Activated B cell treated with CpG ODN at 0.5 μM for 24 hours (primary cell): ENCODE measurements at regions of chr17 and their contacts with region 1.

Region 1: GRCh38 chr17:14359163-14360020 is 58.5 kb downstream of the HS3ST3B1 start:
- DNase-seq: peak; percentile 61
- ATAC-seq: peak; percentile 98
- H3K4me3 Mint-ChIP-seq: peak overlapping the region; percentile 26
- H3K27ac Mint-ChIP-seq: peak overlapping the region; percentile 8
- H3K4me1 Mint-ChIP-seq: peaks cover 26% of the 10 kb centered on the region
- H3K27me3 Mint-ChIP-seq: no peaks in the 10 kb centered on the region
- CTCF ChIP-seq: no peak

Region 2: DNA sequence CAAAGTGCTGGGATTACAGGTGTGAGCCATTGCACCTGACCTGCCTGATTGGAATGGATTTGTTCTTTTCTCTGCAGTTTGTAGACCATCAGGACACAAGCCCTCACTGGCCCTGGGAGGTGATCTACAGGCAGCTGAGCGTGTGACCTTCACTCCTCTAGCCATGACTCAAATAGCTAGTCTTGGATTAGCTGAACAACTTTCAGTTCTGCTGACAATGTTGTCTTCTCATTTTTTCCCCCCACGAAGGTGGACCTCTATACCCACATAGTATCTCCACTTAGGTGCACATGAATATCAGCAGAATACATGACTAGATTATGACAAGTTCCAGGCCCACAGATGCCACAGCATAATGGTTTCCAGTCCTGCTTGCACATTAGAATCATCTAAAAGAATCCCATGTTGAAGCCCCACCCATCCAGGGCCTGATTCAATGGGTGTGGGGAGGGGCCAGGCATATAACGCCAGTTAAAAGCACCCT is 21.8 kb before region 1 on chr17:
- CTCF ChIA-PET with region 1: interaction called, 3 read pairs
- POLR2A ChIA-PET with region 1: no interaction called
- intact Hi-C with region 1: loop called (anchors 1 kb)
- DNase-seq: no peak
- ATAC-seq: peak; percentile 82
- H3K4me3 Mint-ChIP-seq: no peak overlapping the region
- H3K27ac Mint-ChIP-seq: no peak overlapping the region
- H3K4me1 Mint-ChIP-seq: peaks cover 18% of the 10 kb centered on the region
- H3K27me3 Mint-ChIP-seq: peaks cover 17% of the 10 kb centered on the region
- CTCF ChIP-seq: no peak

Region 3: DNA sequence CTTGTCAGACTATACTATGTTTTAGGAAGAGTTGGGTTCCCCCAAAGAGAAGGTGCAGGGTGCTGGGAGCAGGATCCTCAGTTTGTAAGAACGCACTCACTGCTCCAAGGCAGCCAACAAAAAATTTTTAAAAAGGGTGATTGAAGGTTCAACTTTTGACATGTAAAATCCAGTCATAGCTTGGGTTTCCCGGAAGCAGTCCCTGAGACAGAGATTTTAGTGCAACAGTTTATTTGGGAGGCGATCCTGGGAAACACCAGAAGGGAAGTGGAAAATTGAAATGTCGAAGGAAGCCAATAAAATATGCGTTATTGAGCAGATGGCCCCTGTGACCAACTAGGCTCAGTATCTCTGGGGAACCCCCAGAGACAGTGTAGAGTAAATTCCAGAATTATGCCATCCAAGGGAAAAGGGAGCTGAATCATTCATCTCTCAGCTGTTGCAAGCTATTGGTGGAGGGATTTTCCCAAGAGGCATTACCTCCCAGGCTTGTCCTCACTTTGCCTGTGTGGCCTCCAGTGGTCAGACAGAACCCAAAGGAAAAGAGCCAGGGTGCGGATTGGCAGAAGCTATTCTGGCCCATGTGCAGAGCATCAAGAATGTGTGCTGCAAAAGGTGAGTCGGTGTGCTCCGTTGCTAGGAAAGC is 14.3 kb after region 1 on chr17:
- CTCF ChIA-PET with region 1: no interaction called
- POLR2A ChIA-PET with region 1: no interaction called
- intact Hi-C with region 1: no loop called
- DNase-seq: no peak
- ATAC-seq: no peak
- H3K4me3 Mint-ChIP-seq: no peak overlapping the region
- H3K27ac Mint-ChIP-seq: no peak overlapping the region
- H3K4me1 Mint-ChIP-seq: no peaks in the 10 kb centered on the region
- H3K27me3 Mint-ChIP-seq: peaks cover 10% of the 10 kb centered on the region
- CTCF ChIP-seq: no peak

Region 4: GRCh38 chr17:14427900-14428647 is 68.7 kb after region 1 on chr17:
- CTCF ChIA-PET with region 1: interaction called, 6 read pairs
- POLR2A ChIA-PET with region 1: interaction called, 24 read pairs
- intact Hi-C with region 1: loop called (anchors 1 kb)
- DNase-seq: peak; percentile 37
- ATAC-seq: peak; percentile 86
- H3K4me3 Mint-ChIP-seq: peak overlapping the region; percentile 75
- H3K27ac Mint-ChIP-seq: peak overlapping the region; percentile 87
- H3K4me1 Mint-ChIP-seq: peaks cover 50% of the 10 kb centered on the region
- H3K27me3 Mint-ChIP-seq: no peaks in the 10 kb centered on the region
- CTCF ChIP-seq: no peak

Region 5: DNA sequence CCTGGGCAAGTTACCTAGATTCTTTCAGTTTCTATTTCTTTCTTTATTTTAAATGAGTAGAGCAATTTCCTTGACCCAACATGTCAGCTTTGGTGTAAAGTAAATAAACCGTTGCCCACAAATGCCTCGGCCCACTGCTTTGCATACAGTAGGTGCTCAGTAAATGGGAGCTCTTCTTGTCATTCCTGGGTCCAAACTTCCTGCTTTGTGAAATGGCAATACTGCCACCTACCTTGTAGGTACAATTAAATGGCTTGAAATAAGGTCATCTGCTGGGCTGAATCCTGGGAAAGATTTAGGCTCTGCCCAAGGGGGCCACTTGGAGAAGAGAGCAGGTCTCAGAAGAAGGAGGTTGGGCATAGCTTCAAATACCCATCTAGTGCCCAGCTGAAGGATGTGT is 194.5 kb after region 1 on chr17:
- CTCF ChIA-PET with region 1: no interaction called
- POLR2A ChIA-PET with region 1: no interaction called
- intact Hi-C with region 1: loop called (anchors 5 kb)
- DNase-seq: no peak
- ATAC-seq: no peak
- H3K4me3 Mint-ChIP-seq: no peak overlapping the region
- H3K27ac Mint-ChIP-seq: no peak overlapping the region
- H3K4me1 Mint-ChIP-seq: peaks cover 3% of the 10 kb centered on the region
- H3K27me3 Mint-ChIP-seq: peaks cover 1% of the 10 kb centered on the region
- CTCF ChIP-seq: no peak

Region 6: GRCh38 chr17:14605267-14605599 is 245.8 kb after region 1 on chr17:
- CTCF ChIA-PET with region 1: no interaction called
- POLR2A ChIA-PET with region 1: no interaction called
- intact Hi-C with region 1: loop called (anchors 5 kb)
- DNase-seq: no peak
- ATAC-seq: peak; percentile 91
- H3K4me3 Mint-ChIP-seq: peak overlapping the region; percentile 53
- H3K27ac Mint-ChIP-seq: peak overlapping the region; percentile 74
- H3K4me1 Mint-ChIP-seq: peaks cover 20% of the 10 kb centered on the region
- H3K27me3 Mint-ChIP-seq: no peaks in the 10 kb centered on the region
- CTCF ChIP-seq: no peak

Region 7: GRCh38 chr17:14784997-14785696 is 425.8 kb after region 1 on chr17:
- CTCF ChIA-PET with region 1: no interaction called
- POLR2A ChIA-PET with region 1: no interaction called
- intact Hi-C with region 1: loop called (anchors 10 kb)
- DNase-seq: no peak
- ATAC-seq: peak; percentile 50
- H3K4me3 Mint-ChIP-seq: no peak overlapping the region
- H3K27ac Mint-ChIP-seq: no peak overlapping the region
- H3K4me1 Mint-ChIP-seq: peaks cover 4% of the 10 kb centered on the region
- H3K27me3 Mint-ChIP-seq: peaks cover 15% of the 10 kb centered on the region
- CTCF ChIP-seq: no peak

Region 8: GRCh38 chr17:14926526-14927122 is 567.2 kb after region 1 on chr17:
- CTCF ChIA-PET with region 1: no interaction called
- POLR2A ChIA-PET with region 1: no interaction called
- intact Hi-C with region 1: loop called (anchors 5 kb)
- DNase-seq: no peak
- ATAC-seq: no peak
- H3K4me3 Mint-ChIP-seq: no peak overlapping the region
- H3K27ac Mint-ChIP-seq: no peak overlapping the region
- H3K4me1 Mint-ChIP-seq: no peaks in the 10 kb centered on the region
- H3K27me3 Mint-ChIP-seq: peaks cover 11% of the 10 kb centered on the region
- CTCF ChIP-seq: peak; percentile 76